ENCODE measurements at regions of chr9 and their contacts with region 1.

Region 1: GRCh38 chr9:133726401-133727276 is 11.5 kb downstream of the SARDH start:
- DNase-seq: no peak
- H3K4me3 ChIP-seq: no peak overlapping the region
- H3K27ac ChIP-seq: no peak overlapping the region
- H3K4me1 ChIP-seq: no peaks in the 10 kb centered on the region
- H3K27me3 ChIP-seq: peaks cover 0 to 24% (median 0%) of the 10 kb centered on the region in 4 donors
- CTCF ChIP-seq: peak; percentile 31 to 44 (median 32)
- EP300 ChIP-seq: no peak
- POLR2A ChIP-seq: no peak

Region 2: DNA sequence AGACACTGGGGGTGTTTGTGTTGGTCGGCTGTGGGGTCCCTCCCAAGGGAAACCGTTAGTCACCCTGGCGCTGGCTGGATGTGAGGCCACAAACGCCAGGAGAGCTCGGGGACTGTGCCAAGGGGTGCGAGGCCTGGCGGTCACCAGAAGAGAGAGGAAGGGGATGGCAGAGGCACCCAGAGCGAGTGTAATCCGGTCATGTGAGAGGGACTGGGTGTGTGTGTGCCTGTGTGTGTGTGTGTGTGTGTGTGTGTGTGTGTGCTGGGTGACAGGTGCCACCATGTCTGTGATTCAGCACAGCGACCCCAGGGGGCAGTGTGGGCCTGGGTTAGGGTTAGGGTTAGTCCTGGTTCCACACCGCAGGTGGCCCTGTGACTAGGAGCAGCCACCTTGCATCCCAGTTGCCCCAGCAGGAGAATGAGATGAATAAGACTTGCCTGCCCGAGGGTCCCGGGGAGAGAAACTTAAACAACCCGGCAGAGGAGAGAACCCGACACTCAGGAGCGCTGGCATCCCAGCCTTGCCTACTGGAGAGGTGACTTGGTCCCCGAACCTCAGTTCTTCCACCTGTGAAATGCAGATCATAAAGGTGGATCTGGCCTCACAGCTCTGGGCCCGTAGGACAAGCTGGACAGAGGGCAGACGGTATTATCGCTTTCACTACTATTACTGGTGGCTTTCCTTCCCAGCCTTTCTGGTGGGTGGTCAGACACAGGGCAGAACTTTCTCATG is 193.5 kb before region 1 on chr9:
- intact Hi-C with region 1: loop called (anchors 2 kb)
- DNase-seq: no peak
- H3K4me3 ChIP-seq: no peak overlapping the region
- H3K27ac ChIP-seq: no peak overlapping the region
- H3K4me1 ChIP-seq: peaks cover 28 to 52% (median 43%) of the 10 kb centered on the region in 4 donors
- H3K27me3 ChIP-seq: peaks cover 0 to 29% (median 0%) of the 10 kb centered on the region in 4 donors
- CTCF ChIP-seq: peak; percentile 33 to 53 (median 51)
- EP300 ChIP-seq: no peak
- POLR2A ChIP-seq: no peak

Region 3: DNA sequence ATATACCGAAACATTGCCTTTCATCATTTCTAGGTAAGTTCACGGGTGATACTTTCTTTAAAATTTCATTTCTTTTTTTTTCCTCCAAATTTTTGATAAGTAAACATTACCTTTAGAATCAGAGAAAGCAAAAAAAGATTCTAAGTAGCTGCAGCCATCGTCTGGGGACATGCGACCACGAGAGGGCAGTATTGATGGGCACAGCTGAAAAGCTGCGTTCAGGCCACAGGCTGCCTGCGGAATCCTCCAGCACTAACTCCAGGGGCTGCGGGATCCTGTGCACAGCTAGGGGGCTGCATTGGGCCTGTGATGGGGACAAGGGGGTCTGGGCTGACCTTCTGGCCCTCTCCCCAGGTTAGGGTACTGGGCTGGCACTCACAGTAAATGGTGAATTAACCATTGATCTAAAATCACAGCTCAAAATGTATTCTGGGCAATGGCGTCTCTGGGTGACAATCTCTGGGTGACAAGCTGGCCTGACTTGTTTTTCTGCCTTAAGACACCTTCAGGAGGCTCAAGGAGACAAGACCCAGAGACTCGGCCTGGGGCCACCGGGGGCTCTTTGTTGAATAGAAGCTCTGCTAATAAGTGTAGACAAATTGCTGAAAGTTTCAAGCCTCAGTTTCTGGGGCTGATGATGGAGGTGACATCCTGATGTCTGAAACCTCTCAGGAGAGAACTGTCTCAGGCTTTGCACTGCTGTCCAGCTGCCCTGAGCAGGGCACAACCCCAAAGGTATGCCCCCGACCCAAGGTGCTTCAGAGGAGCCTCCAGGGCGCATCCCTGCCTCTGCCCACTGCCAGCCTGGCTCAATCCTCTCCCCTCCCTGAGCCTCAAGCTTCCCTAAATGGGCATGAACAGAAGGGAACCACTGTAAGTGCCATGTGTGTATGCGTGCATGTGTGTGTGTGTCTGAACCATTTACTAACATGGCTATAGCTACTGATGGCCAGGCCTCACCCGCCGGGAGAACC is 55.8 kb after region 1 on chr9:
- intact Hi-C with region 1: no loop called
- DNase-seq: no peak
- H3K4me3 ChIP-seq: no peak overlapping the region
- H3K27ac ChIP-seq: no peak overlapping the region
- H3K4me1 ChIP-seq: peaks cover 0 to 7% (median 4%) of the 10 kb centered on the region in 4 donors
- H3K27me3 ChIP-seq: no peaks in the 10 kb centered on the region
- CTCF ChIP-seq: peak; percentile 58 to 82 (median 67)
- EP300 ChIP-seq: no peak
- POLR2A ChIP-seq: no peak

Region 4: GRCh38 chr9:133803028-133803585 is 76.5 kb after region 1 on chr9:
- intact Hi-C with region 1: no loop called
- DNase-seq: no peak
- H3K4me3 ChIP-seq: no peak overlapping the region
- H3K27ac ChIP-seq: no peak overlapping the region
- H3K4me1 ChIP-seq: no peaks in the 10 kb centered on the region
- H3K27me3 ChIP-seq: no peaks in the 10 kb centered on the region
- CTCF ChIP-seq: no peak
- EP300 ChIP-seq: no peak
- POLR2A ChIP-seq: no peak